ENCODE measurements at regions of chr11 and their contacts with region 1.

Region 1: DNA sequence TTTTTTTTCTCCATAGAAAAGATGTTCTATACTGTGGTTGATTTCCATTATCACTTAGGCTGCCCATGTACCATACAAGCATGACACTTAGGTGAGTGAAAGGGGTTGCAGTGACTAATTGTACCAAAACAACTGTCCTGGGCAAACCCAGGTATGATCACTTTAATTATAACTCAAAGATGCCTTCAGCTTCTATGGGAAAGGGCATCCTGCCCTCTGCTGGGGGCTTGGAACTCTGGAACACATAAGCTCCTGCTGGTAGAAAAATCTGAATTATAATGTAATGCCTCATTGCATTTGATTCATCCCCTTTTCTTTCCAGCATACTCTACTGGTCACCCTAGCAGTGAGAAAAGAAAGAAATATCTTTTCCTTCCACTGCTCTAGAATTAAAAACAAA is 206.3 kb downstream of the DDX10 start:
- DNase-seq: peak; percentile 71
- ATAC-seq: peak; percentile 62
- H3K4me3 ChIP-seq: no peak overlapping the region
- H3K27ac ChIP-seq: peak overlapping the region; percentile 79
- H3K4me1 ChIP-seq: peaks cover 40% of the 10 kb centered on the region
- H3K27me3 ChIP-seq: no peaks in the 10 kb centered on the region
- CTCF ChIP-seq: peak; percentile 88

Region 2: DNA sequence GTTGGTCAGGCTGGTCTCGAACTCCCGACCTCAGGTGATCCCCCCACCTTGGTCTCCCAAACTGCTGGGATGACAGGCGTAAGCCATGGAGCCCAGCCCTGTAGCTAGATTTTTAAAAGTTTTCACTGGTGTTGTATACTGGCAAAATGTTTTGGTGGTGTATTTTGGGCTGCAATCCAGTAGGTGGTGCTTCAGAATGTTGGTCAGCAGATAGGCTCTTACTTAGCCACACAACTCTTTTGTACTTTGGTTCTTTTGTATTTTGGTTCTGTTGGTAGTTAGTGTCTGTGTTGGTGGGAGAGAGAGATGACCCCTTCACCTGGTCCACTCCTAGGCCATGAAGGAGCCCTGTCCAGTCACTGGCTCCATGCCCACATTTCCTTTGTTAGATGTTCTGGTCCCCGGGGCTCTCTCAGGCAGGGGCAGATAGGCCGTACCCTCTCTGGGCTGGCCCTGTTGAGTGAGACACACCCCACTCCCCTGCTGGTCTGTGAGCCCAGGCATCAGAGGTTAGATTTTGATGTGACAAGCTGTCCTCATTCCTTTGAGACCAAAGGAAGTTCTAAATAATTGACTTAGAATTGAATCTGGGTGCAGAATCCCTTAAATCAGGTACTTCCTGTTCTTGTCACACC is 82.5 kb before region 1 on chr11:
- CTCF ChIA-PET with region 1: no interaction called
- POLR2A ChIA-PET with region 1: no interaction called
- intact Hi-C with region 1: loop called (anchors 5 kb)
- DNase-seq: peak; percentile 63
- ATAC-seq: peak; percentile 71
- H3K4me3 ChIP-seq: no peak overlapping the region
- H3K27ac ChIP-seq: no peak overlapping the region
- H3K4me1 ChIP-seq: peaks cover 11% of the 10 kb centered on the region; the same call in 1 of the 2 replicates
- H3K27me3 ChIP-seq: no peaks in the 10 kb centered on the region
- CTCF ChIP-seq: peak; percentile 73

Region 3: DNA sequence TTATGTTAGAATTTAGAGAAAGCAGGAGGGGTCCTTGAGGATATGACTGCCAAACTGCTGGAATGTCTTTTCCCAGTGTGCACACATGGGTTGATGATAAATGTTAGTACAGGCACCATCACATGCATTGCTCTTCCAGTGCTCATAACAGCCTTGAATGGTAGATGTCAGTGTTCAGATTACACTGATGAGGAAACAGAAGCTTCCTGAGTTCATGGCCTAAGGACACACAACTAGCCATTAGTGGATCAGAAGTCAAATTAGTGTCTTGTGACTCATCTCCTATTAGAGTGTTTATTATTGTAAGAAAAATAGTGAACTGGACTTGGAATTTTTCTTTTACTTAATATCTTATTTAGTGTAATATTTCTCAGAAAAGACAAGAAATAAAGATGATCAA is 35.2 kb after region 1 on chr11:
- CTCF ChIA-PET with region 1: no interaction called
- POLR2A ChIA-PET with region 1: no interaction called
- intact Hi-C with region 1: loop called (anchors 1 kb)
- DNase-seq: peak; percentile 87
- ATAC-seq: peak; percentile 98
- H3K4me3 ChIP-seq: no peak overlapping the region
- H3K27ac ChIP-seq: peak overlapping the region; percentile 76
- H3K4me1 ChIP-seq: peaks cover 23% of the 10 kb centered on the region
- H3K27me3 ChIP-seq: no peaks in the 10 kb centered on the region
- CTCF ChIP-seq: no peak

Region 4: GRCh38 chr11:109015283-109015682 is 144.1 kb after region 1 on chr11:
- CTCF ChIA-PET with region 1: no interaction called
- POLR2A ChIA-PET with region 1: no interaction called
- intact Hi-C with region 1: loop called (anchors 2 kb)
- DNase-seq: peak; percentile 91
- ATAC-seq: peak; percentile 91
- H3K4me3 ChIP-seq: no peak overlapping the region
- H3K27ac ChIP-seq: peak overlapping the region; percentile 27
- H3K4me1 ChIP-seq: peaks cover 17% of the 10 kb centered on the region
- H3K27me3 ChIP-seq: no peaks in the 10 kb centered on the region
- CTCF ChIP-seq: no peak

Region 5: DNA sequence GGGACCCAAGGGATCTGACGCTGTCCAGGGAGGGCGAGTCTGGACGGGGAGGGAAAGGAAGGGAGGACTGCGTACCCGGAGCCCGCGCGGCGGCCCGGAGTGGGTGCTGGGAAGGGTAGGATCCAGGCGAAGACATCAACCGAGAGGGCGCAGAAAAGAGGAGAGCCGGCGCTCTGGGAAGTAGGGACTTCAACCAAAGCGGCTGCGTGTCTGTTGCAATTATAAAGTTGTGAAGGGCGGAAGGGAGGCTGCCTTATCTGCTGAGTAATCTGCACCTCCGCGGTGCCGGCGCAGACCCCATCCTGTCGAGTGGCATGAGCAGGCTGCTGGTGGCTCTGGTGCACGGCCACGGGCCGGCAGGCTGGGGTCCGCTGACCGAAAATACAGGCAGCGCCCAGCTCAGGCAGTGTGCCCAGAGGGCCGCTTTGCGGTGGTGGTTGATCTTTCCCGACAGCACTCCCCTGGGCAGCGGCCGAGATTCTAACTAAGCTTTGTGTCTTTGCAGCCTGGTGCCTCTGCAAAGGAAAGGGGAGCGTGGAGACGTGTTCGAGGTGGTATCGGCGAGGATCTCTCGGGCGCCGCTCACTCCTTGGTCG is 551.8 kb after region 1 on chr11:
- CTCF ChIA-PET with region 1: no interaction called
- POLR2A ChIA-PET with region 1: no interaction called
- intact Hi-C with region 1: no loop called
- DNase-seq: no peak
- ATAC-seq: no peak
- H3K4me3 ChIP-seq: no peak overlapping the region
- H3K27ac ChIP-seq: no peak overlapping the region
- H3K4me1 ChIP-seq: no peaks in the 10 kb centered on the region
- H3K27me3 ChIP-seq: peaks cover 45% of the 10 kb centered on the region
- CTCF ChIP-seq: no peak